AG04450 (cell line): ENCODE measurements at regions of chr17 and their contacts with region 1.

Region 1: GRCh38 chr17:17859909-17860765 is 23.4 kb upstream of the SREBF1 start:
- DNase-seq: no peak
- H3K4me3 ChIP-seq: no peak overlapping the region
- H3K27ac ChIP-seq: no peak overlapping the region
- H3K27me3 ChIP-seq: no peaks in the 10 kb centered on the region
- CTCF ChIP-seq: peak; percentile 97

Region 2: DNA sequence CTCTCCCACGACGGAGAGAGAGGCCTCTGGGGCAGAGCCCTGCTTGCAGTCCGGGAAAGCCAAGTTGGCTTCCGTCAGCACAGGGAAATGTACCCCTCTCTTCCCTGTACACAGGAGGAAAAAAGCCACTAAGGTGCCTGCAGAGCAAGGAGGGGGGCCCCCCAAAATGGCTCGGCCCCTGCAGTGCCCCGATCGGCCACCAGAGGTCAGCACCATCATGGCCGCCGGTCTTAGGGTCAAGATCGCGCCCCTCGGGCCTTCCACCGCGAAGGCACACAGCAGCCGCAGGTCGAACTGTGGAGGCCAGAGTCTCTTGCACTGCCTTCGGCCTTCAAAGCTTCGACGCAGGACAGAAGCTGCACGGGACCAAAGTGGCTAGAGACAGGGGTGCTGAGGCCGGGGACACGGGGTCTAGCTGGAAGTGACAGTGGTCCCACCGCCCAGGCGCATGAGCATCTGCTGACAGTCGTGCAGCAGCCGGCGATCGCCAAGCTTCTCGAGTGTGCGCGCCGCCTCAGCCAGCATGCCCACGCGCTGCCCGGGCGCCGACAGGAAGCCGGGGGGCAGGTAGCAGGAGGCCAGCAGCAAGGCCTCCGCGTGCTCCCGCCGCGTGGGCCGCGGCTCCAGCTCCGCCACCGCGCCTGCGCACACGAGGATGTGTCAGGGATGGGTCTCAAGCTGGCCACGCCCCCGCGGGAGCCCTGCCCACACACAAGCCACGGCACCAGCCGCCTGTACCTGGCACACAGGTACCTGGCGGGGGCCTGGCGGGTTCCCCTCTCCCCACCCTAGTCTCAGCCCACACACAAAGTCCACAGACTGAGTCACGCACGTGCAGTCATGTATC is 47.7 kb before region 1 on chr17:
- CTCF ChIA-PET with region 1: interaction called, 19 read pairs
- POLR2A ChIA-PET with region 1: no interaction called
- DNase-seq: no peak
- H3K4me3 ChIP-seq: no peak overlapping the region
- H3K27ac ChIP-seq: no peak overlapping the region
- H3K27me3 ChIP-seq: no peaks in the 10 kb centered on the region
- CTCF ChIP-seq: peak; percentile 99

Region 3: DNA sequence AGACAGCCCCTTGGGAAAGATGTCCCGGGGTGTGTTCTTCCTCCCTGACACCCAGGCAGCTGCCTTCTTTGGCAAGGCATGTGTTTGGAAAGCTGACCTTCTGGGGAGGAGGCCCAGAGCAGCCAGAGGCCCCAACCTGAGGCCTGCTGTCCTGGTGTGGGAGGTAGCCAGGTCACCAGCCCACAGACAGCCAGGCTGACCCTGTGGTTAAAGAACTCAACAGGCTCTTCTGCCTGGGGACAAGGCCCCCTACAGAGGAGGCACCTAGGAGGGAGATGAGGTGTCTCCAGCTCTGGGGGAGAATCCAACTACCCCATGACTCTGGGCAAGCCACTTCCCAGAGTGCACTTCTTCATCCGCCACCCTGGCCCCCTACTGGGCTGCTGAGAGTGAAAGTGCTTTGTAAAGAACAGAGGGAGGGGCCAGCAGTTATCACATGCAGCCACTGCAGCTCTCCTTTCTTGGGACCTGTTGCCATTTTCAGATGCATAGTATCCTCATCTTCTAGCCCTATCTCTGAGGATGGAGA is 10.2 kb before region 1 on chr17:
- CTCF ChIA-PET with region 1: interaction called, 10 read pairs
- POLR2A ChIA-PET with region 1: no interaction called
- DNase-seq: no peak
- H3K4me3 ChIP-seq: no peak overlapping the region
- H3K27ac ChIP-seq: peak overlapping the region; percentile 21
- H3K27me3 ChIP-seq: no peaks in the 10 kb centered on the region
- CTCF ChIP-seq: peak; percentile 40